OCI-LY7 (cell line): ENCODE measurements at regions of chr1 and their contacts with region 1.

Region 1: GRCh38 chr1:84298328-84298683 is 3.2 kb upstream of the SAMD13 start:
- DNase-seq: peak; percentile 73
- H3K4me3 ChIP-seq: peak overlapping the region; percentile 94
- H3K27ac ChIP-seq: peak overlapping the region; percentile 57
- H3K4me1 ChIP-seq: peaks cover 50% of the 10 kb centered on the region
- CTCF ChIP-seq: no peak

Region 2: DNA sequence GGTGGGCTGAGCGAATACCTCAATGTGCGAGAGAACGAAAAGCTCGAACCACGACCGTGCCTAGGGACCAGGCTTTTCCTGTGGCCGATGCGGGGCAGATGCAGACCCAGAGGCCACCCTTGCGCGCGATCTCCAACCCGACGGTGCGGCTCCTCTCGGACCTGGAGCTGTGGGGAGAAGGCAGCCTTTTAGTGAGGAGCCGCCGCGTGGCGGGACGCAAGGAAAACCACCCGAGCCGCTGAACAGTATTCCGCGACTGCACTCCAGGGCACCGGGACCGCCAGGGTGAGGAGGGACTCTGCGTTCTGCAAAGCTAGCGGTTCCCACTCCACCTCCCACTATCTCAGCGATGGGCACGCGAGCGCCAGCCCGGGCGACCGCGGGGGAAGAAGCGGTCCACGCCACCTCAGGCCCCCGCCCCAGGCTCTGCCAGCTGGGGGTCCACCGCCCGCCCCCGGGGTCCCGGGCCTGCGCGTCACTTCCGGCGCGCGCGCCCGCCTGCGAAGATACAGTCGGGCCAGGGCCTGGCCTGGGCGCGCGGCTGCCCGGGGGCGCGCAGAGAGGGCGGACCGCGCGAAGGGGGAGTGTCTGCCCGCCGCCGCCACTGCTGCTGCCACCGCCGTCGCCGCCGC is 220.7 kb before region 1 on chr1:
- CTCF ChIA-PET with region 1: interaction called, 4 read pairs
- POLR2A ChIA-PET with region 1: interaction called, 8 read pairs
- intact Hi-C with region 1: loop called (anchors 5 kb)
- DNase-seq: peak; percentile 89
- H3K4me3 ChIP-seq: peak overlapping the region; percentile 80
- H3K27ac ChIP-seq: peak overlapping the region; percentile 32
- H3K4me1 ChIP-seq: peaks cover 15% of the 10 kb centered on the region
- CTCF ChIP-seq: no peak

Region 3: GRCh38 chr1:84311296-84311695 is 13.0 kb after region 1 on chr1:
- CTCF ChIA-PET with region 1: no interaction called
- POLR2A ChIA-PET with region 1: interaction called, 25 read pairs
- intact Hi-C with region 1: no loop called
- DNase-seq: no peak
- H3K4me3 ChIP-seq: no peak overlapping the region
- H3K27ac ChIP-seq: no peak overlapping the region
- H3K4me1 ChIP-seq: peaks cover 4% of the 10 kb centered on the region
- CTCF ChIP-seq: no peak

Region 4: DNA sequence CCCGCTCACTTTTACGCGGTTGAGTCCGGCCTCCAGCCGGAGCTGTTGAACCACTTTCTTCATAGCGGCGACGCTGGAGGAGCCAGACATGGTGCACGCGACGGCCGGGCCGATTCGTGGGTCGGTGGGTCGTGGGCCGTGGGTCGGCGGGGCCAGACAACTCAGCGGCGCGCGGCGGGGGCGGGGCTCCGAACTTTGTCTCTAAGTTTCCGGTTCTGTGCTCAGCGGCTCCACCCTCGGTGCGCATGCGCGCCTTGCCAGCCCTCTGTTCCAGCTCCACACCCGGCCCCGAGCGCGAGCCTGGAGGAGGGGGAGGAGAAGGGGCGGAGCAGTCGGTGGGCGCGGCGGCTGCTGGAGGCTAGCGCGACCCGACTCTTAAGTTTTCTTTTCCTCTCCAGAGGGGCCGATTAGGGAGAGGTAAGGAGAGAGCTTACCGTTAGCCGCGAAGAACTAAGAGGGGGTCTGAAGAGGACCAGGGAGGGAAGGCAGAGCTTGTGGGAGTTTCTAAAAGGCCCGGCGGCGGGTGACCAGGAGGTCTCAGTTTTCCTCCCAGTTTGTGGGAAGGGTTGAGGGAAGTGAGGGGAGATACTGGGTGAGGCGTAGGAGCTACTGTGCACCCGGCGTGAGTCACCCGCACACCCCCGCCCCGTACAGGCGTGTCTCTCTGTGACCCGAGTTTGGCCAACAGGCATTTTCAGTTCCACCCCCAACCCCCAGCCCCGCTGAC is 207.9 kb after region 1 on chr1 and contains the starts of genes GNG5 and SPATA1:
- CTCF ChIA-PET with region 1: no interaction called
- POLR2A ChIA-PET with region 1: interaction called, 6 read pairs
- intact Hi-C with region 1: loop called (anchors 2 kb)
- DNase-seq: peak; percentile 96
- H3K4me3 ChIP-seq: peak within 1 kb of the TSS; percentile 91
- H3K27ac ChIP-seq: peak within 1 kb of the TSS; percentile 87
- H3K4me1 ChIP-seq: peaks cover 33% of the 10 kb centered on the region
- CTCF ChIP-seq: no peak
- total RNA-seq, gene GNG5: 25.7 and 45.1 TPM in 2 replicates
- total RNA-seq, gene SPATA1: 4.7 and 4.8 TPM in 2 replicates

Region 5: GRCh38 chr1:84690397-84691121 is 392.3 kb after region 1 on chr1 and contains the start of gene SSX2IP:
- CTCF ChIA-PET with region 1: no interaction called
- POLR2A ChIA-PET with region 1: interaction called, 6 read pairs
- intact Hi-C with region 1: loop called (anchors 5 kb)
- DNase-seq: peak; percentile 97
- H3K4me3 ChIP-seq: peak within 1 kb of the TSS; percentile 84
- H3K27ac ChIP-seq: peak within 1 kb of the TSS; percentile 77
- H3K4me1 ChIP-seq: peaks cover 48% of the 10 kb centered on the region
- CTCF ChIP-seq: no peak
- total RNA-seq, gene SSX2IP: 24.1 and 29.9 TPM in 2 replicates

Region 6: GRCh38 chr1:85276215-85276977 is 978.1 kb after region 1 on chr1 and contains the start of gene BCL10:
- CTCF ChIA-PET with region 1: no interaction called
- POLR2A ChIA-PET with region 1: no interaction called
- intact Hi-C with region 1: loop called (anchors 5 kb)
- DNase-seq: peak; percentile 98
- H3K4me3 ChIP-seq: peak within 1 kb of the TSS; percentile 96
- H3K27ac ChIP-seq: peak within 1 kb of the TSS; percentile 82
- H3K4me1 ChIP-seq: peaks cover 25% of the 10 kb centered on the region
- CTCF ChIP-seq: no peak
- total RNA-seq, gene BCL10: 10.6 and 17.4 TPM in 2 replicates